Left ventricle myocardium superior (tissue), 1 donor: ENCODE measurements at regions of chr18 and their contacts with region 1.

Region 1: GRCh38 chr18:39806525-39806924 is 2148.5 kb upstream of the PIK3C3 start:
- DNase-seq: no peak
- ATAC-seq: no peak

Region 2: GRCh38 chr18:39871961-39872360 is 65.4 kb after region 1 on chr18:
- intact Hi-C with region 1: loop called (anchors 10 kb)
- DNase-seq: no peak
- ATAC-seq: no peak